Right lobe of liver (tissue), 6 donors: ENCODE measurements at regions of chr1 and their contacts with region 1.

Region 1: GRCh38 chr1:119286587-119287181 is 81.9 kb upstream of the HAO2 start:
- DNase-seq: no peak
- ATAC-seq: peak; percentile 85 to 89 (median 86)
- H3K4me3 ChIP-seq: no peak overlapping the region
- H3K27ac ChIP-seq: no peak overlapping the region
- H3K4me1 ChIP-seq: no peaks in the 10 kb centered on the region
- H3K27me3 ChIP-seq: no peaks in the 10 kb centered on the region
- CTCF ChIP-seq: peak; percentile 41 to 63 (median 58)
- POLR2A ChIP-seq: no peak

Region 2: DNA sequence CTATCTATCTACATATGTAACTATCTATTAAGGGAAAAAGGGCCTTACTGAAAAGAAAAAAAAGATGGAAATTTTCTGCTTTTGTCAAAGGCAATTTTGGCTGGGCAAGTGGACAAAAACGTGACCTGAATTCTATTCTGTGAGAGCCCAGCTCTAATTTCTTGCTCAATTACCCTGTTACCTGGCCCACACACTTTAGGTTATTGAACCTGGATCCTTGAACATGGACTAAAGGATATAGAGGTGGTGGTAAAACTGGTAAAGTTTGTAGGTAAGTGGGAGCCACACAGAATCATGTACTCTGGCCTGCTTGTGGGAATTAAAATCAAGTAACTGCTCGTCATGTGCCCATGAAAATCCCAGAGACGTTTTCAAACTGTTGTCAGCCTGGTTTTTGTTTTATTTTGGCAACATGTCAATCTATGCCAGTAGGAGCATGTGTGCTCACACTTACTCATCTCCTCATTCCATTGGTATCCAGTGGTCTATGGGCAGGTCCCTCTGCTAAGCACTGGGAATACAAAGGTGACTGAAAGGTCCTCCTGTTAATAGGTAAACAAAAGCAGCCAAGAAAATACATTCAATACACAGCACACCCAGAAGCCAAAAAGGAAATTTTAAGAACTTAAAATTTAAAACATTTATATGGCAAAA is 32.5 kb before region 1 on chr1:
- intact Hi-C with region 1: no loop called
- DNase-seq: no peak
- ATAC-seq: peak; percentile 31 to 88 (median 56)
- H3K4me3 ChIP-seq: no peak overlapping the region
- H3K27ac ChIP-seq: no peak overlapping the region
- H3K4me1 ChIP-seq: peaks cover 0 to 4% (median 0%) of the 10 kb centered on the region in 4 donors
- H3K27me3 ChIP-seq: no peaks in the 10 kb centered on the region
- CTCF ChIP-seq: no peak
- POLR2A ChIP-seq: no peak

Region 3: GRCh38 chr1:119367427-119368124 is 80.9 kb after region 1 on chr1:
- intact Hi-C with region 1: loop called in 1 of 2 experiments (anchors 10 kb)
- DNase-seq: no peak
- ATAC-seq: peak; percentile 36 to 69 (median 48)
- H3K4me3 ChIP-seq: no peak overlapping the region
- H3K27ac ChIP-seq: peak overlapping the region in 1 of 3 donors; percentile 68
- H3K4me1 ChIP-seq: peaks cover 0 to 51% (median 13%) of the 10 kb centered on the region in 4 donors
- H3K27me3 ChIP-seq: no peaks in the 10 kb centered on the region
- CTCF ChIP-seq: peak; percentile 72 to 97 (median 88)
- POLR2A ChIP-seq: no peak

Region 4: GRCh38 chr1:119453021-119453420 is 166.3 kb after region 1 on chr1:
- intact Hi-C with region 1: no loop called
- DNase-seq: peak; percentile 44 to 68 (median 61)
- ATAC-seq: peak; percentile 55 to 78 (median 67)
- H3K4me3 ChIP-seq: no peak overlapping the region
- H3K27ac ChIP-seq: peak overlapping the region in 1 of 3 donors; percentile 68
- H3K4me1 ChIP-seq: peaks cover 0 to 25% (median 10%) of the 10 kb centered on the region in 4 donors
- H3K27me3 ChIP-seq: no peaks in the 10 kb centered on the region
- CTCF ChIP-seq: no peak
- POLR2A ChIP-seq: no peak